Mammary epithelial cell (primary cell): ENCODE measurements at regions of chr5 and their contacts with region 1.

Region 1: DNA sequence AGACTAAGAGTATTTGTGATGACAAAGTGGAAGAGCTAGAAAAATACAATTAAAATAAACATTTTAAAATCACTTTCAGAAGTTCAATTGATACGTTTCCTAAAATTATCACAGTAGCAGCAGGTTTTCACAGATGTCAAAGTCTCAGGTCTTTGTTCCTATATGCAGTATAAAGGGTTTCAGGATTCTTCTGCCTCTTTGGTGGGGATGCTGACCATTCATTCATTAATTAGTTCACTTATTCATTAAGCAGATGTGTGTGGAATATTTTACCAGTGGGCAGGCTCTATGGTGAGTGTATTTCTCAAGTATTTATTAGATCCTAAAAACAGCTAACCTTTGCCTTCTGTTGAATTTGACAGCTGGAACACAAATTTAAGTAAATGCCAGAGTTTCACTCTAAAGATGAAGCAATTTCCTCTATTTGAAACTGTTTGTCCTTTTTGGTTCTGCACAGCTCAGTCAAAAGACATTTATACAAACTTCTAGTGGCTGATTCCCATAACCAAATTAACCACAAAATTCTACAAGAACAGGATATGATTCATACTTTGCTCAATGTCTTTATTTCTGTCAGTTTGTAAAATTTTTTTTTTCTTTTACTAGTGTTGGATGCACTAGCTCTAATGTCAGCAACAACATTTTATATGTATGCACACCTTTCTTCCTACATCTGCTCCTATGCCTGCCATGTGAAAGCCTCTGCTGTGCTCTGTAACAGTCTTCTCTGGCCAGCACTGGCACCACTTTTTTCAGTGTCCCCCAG is 75.9 kb upstream of the PRR16 start:
- DNase-seq: peak; percentile 88
- H3K4me3 ChIP-seq: no peak overlapping the region
- H3K27ac ChIP-seq: peak overlapping the region; percentile 76
- H3K4me1 ChIP-seq: peaks cover 30% of the 10 kb centered on the region
- H3K27me3 ChIP-seq: no peaks in the 10 kb centered on the region
- CTCF ChIP-seq: no peak

Region 2: DNA sequence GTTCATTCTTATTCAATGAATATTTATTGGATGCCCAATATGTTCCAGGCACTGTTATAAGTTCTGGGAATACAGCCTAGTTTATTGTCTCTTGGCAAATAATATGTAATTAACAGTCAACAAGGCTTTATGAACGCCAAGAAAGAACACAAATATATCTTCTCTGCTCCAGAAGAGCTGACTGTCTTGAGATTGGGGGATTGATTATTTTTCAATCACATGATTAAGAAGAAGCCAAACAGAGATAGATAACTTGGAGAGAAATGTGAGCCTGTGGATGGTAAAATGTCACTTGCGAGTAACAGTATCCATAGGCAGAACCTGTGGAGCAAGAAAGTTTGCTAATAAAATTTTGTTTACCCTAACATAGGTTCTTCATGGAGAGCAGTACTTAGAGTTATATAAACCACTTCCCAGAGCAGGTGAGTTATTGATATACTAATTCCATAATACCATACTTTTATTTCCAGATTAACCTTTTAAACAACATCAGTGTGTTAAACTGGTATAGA is 886.5 kb before region 1 on chr5:
- CTCF ChIA-PET with region 1: no interaction called
- dilution Hi-C with region 1: no loop called
- in situ Hi-C with region 1: no loop called
- intact Hi-C with region 1: no loop called
- DNase-seq: no peak
- H3K4me3 ChIP-seq: no peak overlapping the region
- H3K27ac ChIP-seq: no peak overlapping the region
- H3K4me1 ChIP-seq: no peaks in the 10 kb centered on the region
- H3K27me3 ChIP-seq: no peaks in the 10 kb centered on the region
- CTCF ChIP-seq: no peak

Region 3: DNA sequence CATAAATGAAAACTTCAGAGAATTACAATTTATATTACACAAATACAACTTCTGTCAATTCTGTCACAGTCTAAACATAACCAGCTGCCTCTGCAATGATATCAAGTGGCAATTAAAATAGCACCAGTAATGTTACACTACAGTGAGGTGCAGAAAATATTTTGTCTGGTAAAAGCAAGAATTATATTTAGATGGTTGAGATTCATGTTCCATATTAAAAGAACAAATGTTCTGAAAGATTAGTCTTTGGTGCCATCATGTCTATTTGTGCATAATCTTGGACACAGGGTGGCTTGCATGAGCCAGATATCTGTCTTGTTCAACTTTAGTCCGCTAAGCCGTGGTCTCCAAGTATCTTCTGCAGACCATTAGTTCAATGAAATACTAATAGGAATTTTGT is 46.9 kb after region 1 on chr5:
- CTCF ChIA-PET with region 1: no interaction called
- dilution Hi-C with region 1: no loop called
- in situ Hi-C with region 1: no loop called
- intact Hi-C with region 1: no loop called
- DNase-seq: no peak
- H3K4me3 ChIP-seq: no peak overlapping the region
- H3K27ac ChIP-seq: no peak overlapping the region
- H3K4me1 ChIP-seq: peaks cover 5% of the 10 kb centered on the region
- H3K27me3 ChIP-seq: no peaks in the 10 kb centered on the region
- CTCF ChIP-seq: no peak

Region 4: DNA sequence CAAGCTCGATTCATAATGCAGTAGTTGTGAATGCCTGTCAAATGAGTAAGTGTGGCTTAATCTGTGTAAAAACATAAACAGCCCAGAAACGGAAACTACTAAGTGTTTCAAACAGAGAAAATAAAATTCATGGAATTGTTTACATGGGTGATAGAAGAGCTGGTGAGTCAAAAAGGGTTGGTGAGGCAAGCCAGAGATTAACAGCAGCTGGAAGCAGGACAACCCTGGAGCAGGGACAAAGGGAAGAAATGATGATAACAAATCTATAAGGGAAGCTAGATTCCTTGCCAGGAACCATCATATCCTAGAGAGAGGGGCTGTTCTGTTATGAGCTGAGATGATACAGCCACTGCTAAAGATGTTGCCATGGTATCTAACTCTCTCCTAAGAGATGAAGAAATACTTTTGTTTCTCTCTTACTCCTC is 57.9 kb after region 1 on chr5:
- CTCF ChIA-PET with region 1: no interaction called
- dilution Hi-C with region 1: no loop called
- in situ Hi-C with region 1: no loop called
- intact Hi-C with region 1: loop called (anchors 5 kb)
- DNase-seq: peak; percentile 78
- H3K4me3 ChIP-seq: no peak overlapping the region
- H3K27ac ChIP-seq: no peak overlapping the region
- H3K4me1 ChIP-seq: peaks cover 7% of the 10 kb centered on the region
- H3K27me3 ChIP-seq: no peaks in the 10 kb centered on the region
- CTCF ChIP-seq: no peak

Region 5: DNA sequence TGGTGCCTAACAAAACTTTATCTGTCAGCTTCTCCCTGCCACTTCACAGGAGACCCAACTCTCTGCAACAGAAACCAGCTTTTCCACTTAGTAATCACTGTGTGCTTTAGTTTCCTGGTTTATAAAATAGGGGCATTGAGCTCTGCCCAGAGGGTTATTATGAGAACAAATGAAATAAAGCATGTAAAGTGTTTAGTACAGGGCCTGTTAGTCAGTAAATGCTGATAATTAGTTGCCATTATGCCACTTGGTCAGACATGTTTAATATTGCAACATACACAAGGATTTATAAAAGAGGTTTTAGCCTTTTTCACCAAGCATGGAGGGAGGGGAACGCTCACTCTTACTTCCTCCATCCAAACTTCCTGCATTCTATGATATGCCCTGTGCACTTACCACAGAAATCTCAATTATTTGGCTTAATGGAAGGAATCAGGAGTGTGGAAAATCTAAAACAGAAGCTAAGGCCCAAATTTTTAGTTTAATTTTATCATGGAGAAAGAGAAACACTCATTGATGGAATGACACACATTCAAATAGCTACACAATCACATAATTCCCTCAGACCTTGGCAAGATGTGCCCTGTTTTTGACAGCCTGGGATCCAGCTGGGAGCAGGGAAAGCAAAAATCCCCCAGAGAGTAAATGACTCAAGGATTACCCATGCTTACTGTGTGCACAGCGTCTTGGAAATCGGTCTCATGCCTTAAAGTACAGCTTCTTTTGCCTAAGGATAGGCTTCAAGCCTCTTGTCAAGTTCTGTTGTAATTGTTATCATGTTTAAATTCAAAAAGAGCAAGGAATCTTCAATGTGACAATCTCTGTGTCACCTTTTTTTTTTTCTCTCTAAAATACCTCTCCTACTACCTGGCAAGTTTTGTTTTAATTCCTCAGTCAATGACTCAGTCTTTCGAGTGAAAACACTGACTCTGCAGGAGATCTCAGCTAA is 1775.2 kb after region 1 on chr5:
- CTCF ChIA-PET with region 1: no interaction called
- dilution Hi-C with region 1: no loop called
- in situ Hi-C with region 1: no loop called
- intact Hi-C with region 1: loop called (anchors 5 kb)
- DNase-seq: peak; percentile 95
- H3K4me3 ChIP-seq: peak overlapping the region in 1 of 3 experiments; percentile 4
- H3K27ac ChIP-seq: peak overlapping the region; percentile 91
- H3K4me1 ChIP-seq: peaks cover 21% of the 10 kb centered on the region
- H3K27me3 ChIP-seq: no peaks in the 10 kb centered on the region
- CTCF ChIP-seq: no peak